AG04449 (cell line): ENCODE measurements at regions of chr4 and their contacts with region 1.

Region 1: DNA sequence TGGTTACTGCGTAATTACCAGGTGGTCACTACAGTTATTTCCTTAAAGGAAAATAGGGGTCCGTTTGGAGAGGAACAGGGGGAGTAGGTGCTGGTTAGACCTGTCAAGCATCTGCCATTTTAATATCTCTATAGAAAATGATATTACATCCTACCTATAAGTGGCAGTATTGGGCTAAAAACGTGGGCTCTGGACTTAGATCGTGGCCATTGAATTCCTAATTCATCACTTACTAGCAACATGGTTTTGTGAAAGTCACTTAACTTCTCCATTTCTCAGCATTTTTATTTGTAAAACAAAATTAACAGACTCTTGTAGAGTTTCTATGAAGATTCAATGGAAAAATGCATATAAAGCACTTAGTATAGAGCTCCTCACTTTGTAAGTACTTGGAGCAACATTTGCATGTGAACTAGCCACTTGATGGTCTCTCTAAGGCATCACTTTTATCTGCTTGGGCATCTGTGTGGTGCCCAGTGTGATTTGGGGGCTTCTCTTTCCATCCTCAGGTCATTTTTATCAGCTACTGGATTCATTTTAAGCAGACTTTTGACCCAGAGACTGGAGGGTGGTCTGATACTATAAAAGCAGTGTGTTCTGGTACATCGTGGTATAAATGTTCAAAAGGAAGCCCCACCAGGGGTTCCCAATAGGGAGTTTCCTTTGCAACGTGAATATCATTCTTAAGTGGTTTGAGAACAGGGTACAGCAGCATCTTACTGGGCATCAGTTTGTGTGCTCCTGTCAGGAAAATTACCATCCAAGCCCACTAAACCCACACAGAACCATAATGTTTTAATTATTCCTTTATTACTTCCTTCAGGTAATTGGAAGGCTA is 42.7 kb upstream of the RASSF6 start:
- DNase-seq: no peak
- H3K4me3 ChIP-seq: no peak overlapping the region
- CTCF ChIP-seq: peak; percentile 44

Region 2: GRCh38 chr4:73676861-73677323 is 14.0 kb after region 1 on chr4:
- CTCF ChIA-PET with region 1: interaction called, 37 read pairs
- POLR2A ChIA-PET with region 1: no interaction called
- DNase-seq: no peak
- H3K4me3 ChIP-seq: no peak overlapping the region
- CTCF ChIP-seq: no peak

Region 3: DNA sequence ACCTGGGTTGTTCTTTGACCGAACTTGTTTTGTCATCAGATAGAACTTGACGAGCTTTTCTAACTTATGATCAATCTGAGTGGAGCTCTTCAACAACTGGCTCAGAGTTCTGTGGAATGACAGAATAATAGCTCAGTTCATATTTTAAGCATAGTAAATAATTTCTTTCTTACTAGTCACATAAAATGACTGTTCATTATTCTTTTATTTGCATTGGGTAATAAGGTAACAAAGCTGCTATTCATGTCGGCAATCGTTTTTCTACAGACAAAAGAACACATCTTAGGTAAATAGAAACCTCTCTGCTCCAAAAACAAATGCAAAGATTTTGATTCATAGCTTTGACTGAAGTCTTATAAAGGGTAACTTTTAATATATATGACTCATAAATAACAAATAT is 20.1 kb after region 1 on chr4:
- CTCF ChIA-PET with region 1: interaction called, 37 read pairs
- POLR2A ChIA-PET with region 1: no interaction called
- DNase-seq: no peak
- H3K4me3 ChIP-seq: no peak overlapping the region
- CTCF ChIP-seq: no peak

Region 4: DNA sequence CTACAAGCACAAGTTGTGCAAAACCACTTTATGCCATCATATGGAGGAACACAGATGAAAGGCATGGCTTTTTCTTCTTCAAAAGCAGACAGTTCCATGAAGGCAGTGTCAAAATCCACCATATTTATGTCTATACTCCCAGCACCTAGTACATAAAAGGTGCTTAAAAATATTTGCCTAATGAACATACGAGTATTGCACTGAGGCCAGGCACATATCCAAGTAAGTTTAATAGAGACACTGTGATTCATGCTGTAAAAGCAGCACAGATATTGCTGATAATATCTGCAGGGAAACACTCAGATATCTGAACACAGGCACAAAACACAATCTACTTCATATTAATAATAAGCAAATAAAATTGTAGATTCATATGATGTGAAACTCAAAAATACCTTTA is 29.3 kb after region 1 on chr4:
- CTCF ChIA-PET with region 1: interaction called, 13 read pairs
- POLR2A ChIA-PET with region 1: no interaction called
- DNase-seq: no peak
- H3K4me3 ChIP-seq: no peak overlapping the region
- CTCF ChIP-seq: no peak

Region 5: DNA sequence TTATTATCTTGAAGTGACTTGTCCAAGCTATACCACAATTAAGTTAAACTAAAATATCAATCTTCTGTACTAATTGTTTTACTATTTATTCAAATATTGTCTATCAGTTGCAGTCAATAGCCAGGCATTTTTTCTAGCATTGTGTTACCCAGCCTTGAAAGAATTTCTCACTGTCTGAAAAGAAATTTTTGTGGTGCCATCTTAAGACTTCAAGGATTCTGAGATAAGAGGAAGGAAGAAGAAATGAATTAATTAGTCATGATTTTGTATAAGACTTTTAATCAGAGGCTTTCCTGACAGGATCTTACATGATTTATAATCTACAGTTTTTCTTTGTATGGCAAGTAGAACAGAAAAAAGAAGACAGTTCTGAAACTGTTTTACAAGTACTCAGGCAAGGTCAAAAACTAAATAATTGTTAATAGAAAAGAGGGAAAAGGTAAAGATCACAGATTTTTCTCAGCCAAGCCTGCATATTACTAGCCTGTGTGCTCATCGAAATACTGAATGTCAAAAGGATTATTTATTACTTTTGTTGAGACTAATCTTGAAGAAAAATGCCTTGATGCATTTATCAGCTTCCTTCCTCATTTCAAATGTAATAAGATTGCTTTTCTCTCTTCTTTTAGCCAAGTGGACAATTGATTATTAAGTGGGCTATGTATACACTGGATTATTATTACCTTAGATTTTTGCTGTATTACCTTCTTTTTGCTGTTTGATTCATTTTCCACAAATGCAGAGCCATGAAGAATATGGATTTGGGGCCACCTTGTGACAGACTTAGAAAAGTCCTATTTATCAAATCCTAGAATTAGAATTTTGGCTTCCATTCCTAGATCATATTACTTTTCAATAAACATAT is 260.1 kb after region 1 on chr4:
- CTCF ChIA-PET with region 1: interaction called, 215 read pairs
- POLR2A ChIA-PET with region 1: interaction called, 3 read pairs
- DNase-seq: no peak
- H3K4me3 ChIP-seq: no peak overlapping the region
- CTCF ChIP-seq: peak; percentile 21

Region 6: DNA sequence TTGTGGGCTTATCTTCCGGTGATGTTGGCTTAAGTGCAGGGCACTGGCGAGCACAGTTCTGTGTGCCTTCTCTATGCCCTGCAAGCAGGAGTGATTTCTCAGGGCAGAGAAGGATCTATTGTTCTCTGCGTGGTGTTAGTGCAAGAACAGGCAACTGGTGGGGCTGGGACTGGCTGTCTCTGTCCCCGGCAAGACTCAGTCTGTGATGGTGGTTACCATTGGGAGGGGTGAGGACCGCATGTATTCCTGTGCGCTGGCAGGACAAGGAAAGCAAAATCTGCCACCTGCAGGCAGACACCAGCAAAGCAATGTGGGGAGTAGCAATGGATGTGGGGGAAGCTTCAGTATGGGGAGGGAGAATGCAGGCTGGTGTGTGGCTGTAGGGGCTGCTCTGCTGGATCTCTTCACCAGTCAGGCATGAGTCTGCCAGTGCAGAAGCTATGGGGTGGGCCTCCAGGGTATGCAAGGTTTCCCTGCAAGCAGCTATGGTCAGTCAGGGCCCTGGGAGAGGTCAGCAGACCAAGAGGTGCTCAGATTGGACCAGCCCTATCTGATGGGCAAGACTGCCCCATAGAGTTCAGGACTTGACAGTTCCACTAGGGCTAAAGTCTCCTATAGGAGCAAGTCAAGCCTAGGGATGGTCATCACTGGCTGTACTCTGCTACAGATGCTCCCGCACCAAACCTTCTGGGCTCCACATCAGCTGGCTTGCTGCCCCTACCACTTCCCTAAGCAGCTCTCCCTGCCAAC is 302.1 kb after region 1 on chr4:
- CTCF ChIA-PET with region 1: interaction called, 12 read pairs
- POLR2A ChIA-PET with region 1: no interaction called
- DNase-seq: no peak
- H3K4me3 ChIP-seq: no peak overlapping the region
- CTCF ChIP-seq: peak; percentile 30

Region 7: GRCh38 chr4:74038161-74039064 is 375.5 kb after region 1 on chr4 and contains the start of gene CXCL3:
- CTCF ChIA-PET with region 1: interaction called, 16 read pairs
- POLR2A ChIA-PET with region 1: no interaction called
- DNase-seq: no peak
- H3K4me3 ChIP-seq: peak within 1 kb of the TSS; percentile 71
- CTCF ChIP-seq: peak; percentile 11